Activated naive CD4-positive, alpha-beta T cell treated with anti-CD3 and anti-CD28 coated beads for 36 hours (primary cell): ENCODE measurements at regions of chr1 and their contacts with region 1.

Region 1: DNA sequence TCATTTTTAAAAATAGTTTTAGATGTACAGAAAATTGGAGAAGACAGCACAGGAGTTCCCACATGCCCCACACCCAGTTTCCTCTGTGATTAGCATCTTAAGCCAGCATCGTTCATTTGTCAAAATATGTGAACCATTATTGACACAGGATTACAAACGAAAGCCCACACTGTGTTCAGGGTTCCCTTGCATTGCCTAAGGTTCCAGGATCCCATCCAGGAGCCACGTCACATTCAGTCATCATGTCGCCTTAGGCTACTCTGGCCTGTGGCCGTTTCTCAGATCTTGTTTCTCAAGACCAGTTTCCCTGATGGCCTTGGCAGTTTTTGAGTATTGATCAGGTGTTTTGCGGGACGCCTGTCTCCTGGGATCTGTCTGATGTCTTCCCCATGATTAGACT is 34.7 kb upstream of the TNFRSF1B start:
- DNase-seq: no peak
- H3K4me3 Mint-ChIP-seq: no peak overlapping the region
- H3K27ac Mint-ChIP-seq: peak overlapping the region; percentile 68
- H3K4me1 Mint-ChIP-seq: peaks cover 34% of the 10 kb centered on the region
- H3K27me3 Mint-ChIP-seq: no peaks in the 10 kb centered on the region

Region 2: GRCh38 chr1:12153181-12153785 is 21.2 kb after region 1 on chr1:
- CTCF ChIA-PET with region 1: interaction called, 3 read pairs
- intact Hi-C with region 1: loop called (anchors 2 kb)
- DNase-seq: peak; percentile 67
- H3K4me3 Mint-ChIP-seq: no peak overlapping the region
- H3K27ac Mint-ChIP-seq: peak overlapping the region; percentile 89
- H3K4me1 Mint-ChIP-seq: peaks cover 83% of the 10 kb centered on the region
- H3K27me3 Mint-ChIP-seq: no peaks in the 10 kb centered on the region